ENCODE measurements at regions of chr2 and their contacts with region 1.

Region 1: DNA sequence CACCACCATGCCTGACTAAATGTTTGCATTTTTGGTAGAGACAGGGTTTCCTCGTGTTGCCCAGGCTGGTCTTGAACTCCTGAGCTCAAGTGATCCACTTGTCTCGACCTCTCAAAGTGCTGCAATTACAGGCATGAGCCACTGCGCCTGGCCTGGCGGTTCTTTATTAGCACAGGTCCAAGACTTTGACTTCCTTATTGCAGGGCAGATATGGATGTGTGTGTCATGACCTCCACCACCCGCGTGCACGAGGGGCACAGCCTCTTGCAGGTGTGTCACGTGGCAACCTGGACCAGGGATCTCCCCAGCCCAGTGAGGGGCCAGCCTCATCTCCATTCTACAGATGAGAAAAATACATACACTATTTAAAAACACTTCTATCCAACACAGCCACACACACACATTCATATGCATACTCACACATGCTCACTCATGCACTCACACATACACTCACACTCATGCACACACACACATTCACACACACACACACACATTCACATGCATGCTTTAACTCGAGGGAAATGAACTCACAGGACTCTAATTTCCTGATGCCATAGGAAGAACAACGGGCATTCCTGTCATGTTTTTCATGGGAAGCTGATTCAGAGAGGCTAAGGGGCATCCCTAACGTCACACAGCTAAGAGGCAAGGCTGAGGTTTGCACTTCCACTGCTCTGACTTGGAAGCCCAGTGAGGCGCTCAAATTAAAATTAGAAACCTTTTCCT is 38.8 kb downstream of the RRM2 start:
- DNase-seq: no peak
- ATAC-seq: no peak
- H3K4me3 ChIP-seq: no peak overlapping the region
- H3K27ac ChIP-seq: no peak overlapping the region
- H3K4me1 ChIP-seq: peaks cover 4% of the 10 kb centered on the region; the same call in 1 of the 2 replicates
- H3K27me3 ChIP-seq: no peaks in the 10 kb centered on the region
- CTCF ChIP-seq: no peak

Region 2: DNA sequence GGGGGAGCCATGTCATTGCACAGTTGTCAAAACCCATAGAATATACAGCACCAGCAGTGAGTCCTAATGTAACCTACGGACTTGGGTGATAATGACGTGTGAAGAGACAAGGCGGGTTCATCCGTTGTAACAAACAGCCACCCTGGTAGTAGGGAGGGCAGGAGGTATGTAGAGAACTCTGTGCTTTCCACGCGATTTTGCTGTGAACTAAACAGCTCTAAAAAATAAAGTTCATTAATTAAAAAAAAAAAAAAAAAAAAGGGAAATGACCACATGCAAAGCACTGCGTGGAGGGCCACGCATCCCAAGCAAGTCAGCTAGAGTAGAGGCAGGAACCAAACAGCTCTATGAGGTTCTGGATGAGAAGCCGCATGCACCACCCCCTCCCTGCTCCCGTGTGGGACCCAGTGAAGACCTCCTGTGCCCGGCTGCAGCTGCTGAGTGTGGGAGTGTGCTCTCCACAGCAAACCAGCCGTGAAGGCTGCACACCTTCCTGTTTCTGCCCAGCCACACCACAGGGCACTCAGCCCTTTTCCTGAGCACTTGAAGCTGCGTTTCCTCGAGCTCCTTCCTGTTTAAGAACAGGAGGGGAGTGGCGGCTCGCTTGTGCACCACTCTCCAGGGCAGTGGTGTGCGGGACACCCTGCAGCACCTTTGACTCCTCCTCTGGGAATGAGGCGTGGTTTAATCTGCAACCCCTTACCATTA is 221.1 kb after region 1 on chr2:
- CTCF ChIA-PET with region 1: no interaction called
- POLR2A ChIA-PET with region 1: interaction called, 11 read pairs
- in situ Hi-C with region 1: no loop called
- intact Hi-C with region 1: no loop called
- DNase-seq: no peak
- ATAC-seq: peak; percentile 35
- H3K4me3 ChIP-seq: no peak overlapping the region
- H3K27ac ChIP-seq: peak overlapping the region; percentile 80
- H3K4me1 ChIP-seq: peaks cover 99% of the 10 kb centered on the region
- H3K27me3 ChIP-seq: no peaks in the 10 kb centered on the region
- CTCF ChIP-seq: no peak